ENCODE measurements at regions of chr2 and their contacts with region 1.

Region 1: GRCh38 chr2:218292048-218293014 is at the start of gene TMBIM1:
- DNase-seq: peak; percentile 86
- H3K4me3 ChIP-seq: peak within 1 kb of the TSS; percentile 89
- H3K27ac ChIP-seq: peak within 1 kb of the TSS; percentile 91
- H3K4me1 ChIP-seq: peaks cover 66% of the 10 kb centered on the region
- CTCF ChIP-seq: peak; percentile 93
- total RNA-seq, gene TMBIM1: 18.9 and 30.3 TPM in 2 replicates

Region 2: DNA sequence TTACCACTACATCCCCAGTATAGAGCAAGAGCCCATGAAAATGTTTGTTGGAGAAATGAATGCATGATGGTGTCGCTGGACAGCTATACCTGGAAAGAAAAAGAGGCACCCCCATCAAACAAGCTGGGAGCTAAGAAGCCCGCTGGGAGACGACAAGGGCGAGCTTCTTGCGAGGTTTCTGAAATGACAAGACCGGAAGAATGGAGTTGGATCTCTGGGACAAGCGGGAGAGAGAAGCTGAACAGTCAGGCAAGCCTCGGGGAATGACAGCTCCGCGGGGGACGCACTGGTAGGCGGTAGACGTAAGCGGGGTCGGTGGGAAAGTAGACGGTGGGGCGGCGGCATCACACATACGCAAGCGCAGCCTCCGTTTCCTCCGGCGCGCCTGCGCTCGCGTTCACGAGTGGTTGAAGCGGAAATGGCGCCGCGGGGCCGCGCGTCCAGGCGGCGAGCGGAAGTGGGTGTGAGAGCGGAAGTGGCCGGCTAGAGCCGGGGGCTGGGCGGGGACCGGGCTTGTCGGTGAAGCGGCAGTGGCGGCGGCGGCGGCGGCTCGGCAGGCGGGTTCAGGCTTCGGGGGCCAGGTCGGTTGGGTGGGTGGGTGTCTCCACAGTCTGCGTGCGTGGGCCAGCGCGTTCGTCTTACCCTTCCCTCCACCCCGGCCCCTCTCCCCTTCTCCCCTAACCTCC is 75.5 kb before region 1 on chr2 and contains the start of gene ARPC2:
- CTCF ChIA-PET with region 1: no interaction called
- POLR2A ChIA-PET with region 1: interaction called, 4 read pairs
- intact Hi-C with region 1: loop called (anchors 2 kb)
- DNase-seq: peak; percentile 97
- H3K4me3 ChIP-seq: peak within 1 kb of the TSS; percentile 90
- H3K27ac ChIP-seq: peak within 1 kb of the TSS; percentile 92
- H3K4me1 ChIP-seq: peaks cover 32% of the 10 kb centered on the region
- CTCF ChIP-seq: no peak
- total RNA-seq, gene ARPC2: 257 and 264 TPM in 2 replicates

Region 3: DNA sequence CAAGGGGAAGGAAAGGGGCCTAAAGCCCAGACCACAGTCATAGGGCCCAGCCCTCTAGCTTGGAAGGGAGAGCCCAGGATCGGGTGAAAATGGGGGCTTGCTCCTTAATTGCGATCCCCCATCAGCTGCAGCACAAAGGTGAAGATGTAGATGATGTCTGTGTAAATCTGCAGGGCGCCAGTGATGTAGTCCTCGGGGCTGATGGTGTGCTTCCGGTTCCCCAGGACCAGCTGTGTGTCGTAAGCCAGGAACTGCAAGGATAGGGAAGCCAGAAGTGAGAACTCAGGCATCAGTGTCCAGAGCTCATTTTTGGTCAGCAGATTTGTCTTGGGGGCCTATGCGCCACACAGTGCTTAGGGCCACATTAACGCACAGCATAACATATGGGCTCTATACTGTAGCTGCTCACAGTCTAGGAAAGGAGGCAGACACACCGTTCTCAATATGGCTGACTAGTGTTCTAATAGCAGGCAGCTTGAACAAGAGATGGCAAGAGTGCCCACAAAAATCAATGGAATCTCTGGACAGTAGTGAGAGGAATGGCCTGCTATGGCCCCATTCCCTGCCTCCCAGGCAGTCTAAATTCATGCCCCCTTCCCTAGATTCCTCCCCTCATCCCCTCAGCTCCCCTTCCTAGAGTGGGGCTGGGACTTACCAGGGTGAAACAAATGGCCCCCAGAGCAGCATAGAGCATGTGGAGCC is 16.8 kb before region 1 on chr2:
- CTCF ChIA-PET with region 1: interaction called, 17 read pairs
- POLR2A ChIA-PET with region 1: interaction called, 35 read pairs
- intact Hi-C with region 1: loop called (anchors 1 kb)
- DNase-seq: no peak
- H3K4me3 ChIP-seq: no peak overlapping the region
- H3K27ac ChIP-seq: no peak overlapping the region
- H3K4me1 ChIP-seq: peaks cover 23% of the 10 kb centered on the region
- CTCF ChIP-seq: no peak

Region 4: DNA sequence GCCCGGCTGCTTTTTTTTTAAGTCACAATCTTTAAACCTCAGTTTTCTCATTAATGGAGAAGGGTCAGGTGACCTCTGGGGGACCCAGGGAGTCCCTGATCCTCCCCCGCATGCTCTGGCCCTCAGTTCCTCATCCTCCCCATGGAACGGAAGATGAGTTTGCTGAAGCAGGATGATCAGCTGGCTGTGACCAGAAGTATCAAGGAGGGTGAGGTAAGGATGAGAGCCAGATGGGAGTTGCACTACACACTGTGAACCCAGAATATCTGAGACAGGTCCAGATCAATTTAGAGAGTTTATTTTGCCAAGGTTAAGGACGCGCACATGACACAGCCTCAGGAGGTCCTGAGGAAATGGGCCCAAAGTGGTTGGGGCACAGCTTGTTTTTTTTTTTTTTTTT is 68.1 kb after region 1 on chr2:
- CTCF ChIA-PET with region 1: interaction called, 14 read pairs
- POLR2A ChIA-PET with region 1: interaction called, 9 read pairs
- intact Hi-C with region 1: no loop called
- DNase-seq: no peak
- H3K4me3 ChIP-seq: no peak overlapping the region
- H3K27ac ChIP-seq: no peak overlapping the region
- H3K4me1 ChIP-seq: peaks cover 23% of the 10 kb centered on the region
- CTCF ChIP-seq: no peak

Region 5: DNA sequence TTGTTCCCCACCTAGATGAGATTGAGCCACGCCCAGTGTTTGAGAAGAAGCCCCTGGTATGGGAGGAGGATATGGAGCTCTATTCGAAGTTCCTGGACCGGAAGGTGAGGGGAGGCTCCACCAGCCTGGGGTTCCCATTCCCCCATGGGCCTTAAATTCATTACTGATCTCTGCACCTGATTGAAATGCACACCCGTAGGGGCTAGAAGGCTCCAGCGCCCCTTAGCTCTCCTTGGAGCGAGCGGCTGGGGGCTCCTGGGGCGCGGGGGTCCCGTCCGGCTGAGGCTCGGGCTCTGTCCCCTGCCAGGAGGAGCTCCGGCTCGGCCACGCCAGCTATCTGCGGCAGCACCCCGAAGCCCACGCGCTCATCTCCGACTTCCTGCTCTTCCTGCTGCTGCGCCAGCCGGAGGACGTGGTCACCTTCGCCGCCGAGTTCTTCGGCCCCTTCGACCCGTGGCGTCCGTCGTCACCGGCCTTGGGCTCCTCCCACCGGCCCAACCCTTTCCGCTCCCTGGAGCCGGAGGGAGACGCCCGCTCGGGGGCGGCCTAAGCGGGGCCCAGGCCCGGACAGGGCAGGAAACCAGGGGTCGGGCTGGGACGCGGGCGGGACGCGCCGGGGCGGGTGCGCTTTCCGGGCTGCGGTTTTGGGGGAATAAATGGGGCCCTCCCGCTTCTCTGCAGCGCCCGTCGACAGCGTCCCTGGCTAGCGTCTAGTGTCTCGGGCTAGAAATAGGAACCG is 75.3 kb after region 1 on chr2:
- CTCF ChIA-PET with region 1: interaction called, 5 read pairs
- POLR2A ChIA-PET with region 1: interaction called, 10 read pairs
- intact Hi-C with region 1: no loop called
- DNase-seq: peak; percentile 81
- H3K4me3 ChIP-seq: peak overlapping the region; percentile 68
- H3K27ac ChIP-seq: peak overlapping the region; percentile 40
- H3K4me1 ChIP-seq: peaks cover 66% of the 10 kb centered on the region
- CTCF ChIP-seq: peak; percentile 31; the same call in 1 of the 2 replicates

Region 6: GRCh38 chr2:218466016-218466521 is 173.7 kb after region 1 on chr2:
- CTCF ChIA-PET with region 1: no interaction called
- POLR2A ChIA-PET with region 1: no interaction called
- intact Hi-C with region 1: loop called (anchors 5 kb)
- DNase-seq: peak; percentile 24
- H3K4me3 ChIP-seq: no peak overlapping the region
- H3K27ac ChIP-seq: no peak overlapping the region
- H3K4me1 ChIP-seq: peaks cover 6% of the 10 kb centered on the region
- CTCF ChIP-seq: peak; percentile 87

Region 7: GRCh38 chr2:218482651-218483050 is 190.3 kb after region 1 on chr2:
- CTCF ChIA-PET with region 1: no interaction called
- POLR2A ChIA-PET with region 1: no interaction called
- intact Hi-C with region 1: no loop called
- DNase-seq: no peak
- H3K4me3 ChIP-seq: no peak overlapping the region
- H3K27ac ChIP-seq: no peak overlapping the region
- H3K4me1 ChIP-seq: peaks cover 12% of the 10 kb centered on the region
- CTCF ChIP-seq: no peak